Left cardiac atrium (tissue), 4 donors: ENCODE measurements at regions of chr3 and their contacts with region 1.

Region 1: GRCh38 chr3:160163229-160163878 is 61.9 kb upstream of the C3orf80 start:
- DNase-seq: no peak
- ATAC-seq: no peak

Region 2: DNA sequence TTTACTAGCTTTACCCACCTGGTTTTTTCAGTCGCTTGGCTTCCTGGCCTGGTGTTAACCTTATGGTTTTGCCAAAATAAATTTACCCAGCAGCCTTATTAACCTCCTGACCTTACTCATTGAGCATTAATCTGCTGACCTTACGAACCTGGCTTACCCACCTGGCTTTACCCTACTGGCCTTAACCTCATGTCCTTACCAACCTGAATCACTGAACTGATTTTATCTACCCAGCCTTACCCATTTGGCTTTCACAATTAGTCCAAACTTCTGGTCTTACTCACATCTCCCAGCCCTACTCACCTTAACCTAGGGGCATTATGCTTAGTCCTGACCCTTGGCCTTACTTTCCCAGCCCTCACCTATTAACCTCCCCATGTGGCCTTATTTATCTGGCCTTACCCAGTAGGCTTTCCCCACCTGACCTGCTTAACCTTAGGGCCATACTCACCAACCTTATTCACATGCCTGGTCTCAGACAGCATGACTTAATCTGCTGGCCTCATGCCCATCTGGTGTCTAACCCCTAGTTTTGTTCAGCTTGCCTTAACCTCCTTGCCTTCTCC is 81.3 kb before region 1 on chr3:
- intact Hi-C with region 1: no loop called
- DNase-seq: no peak
- ATAC-seq: no peak

Region 3: GRCh38 chr3:160331127-160331937 is 168.0 kb after region 1 on chr3:
- intact Hi-C with region 1: loop called in 1 of 2 experiments (anchors 10 kb)
- DNase-seq: no peak
- ATAC-seq: no peak

Region 4: DNA sequence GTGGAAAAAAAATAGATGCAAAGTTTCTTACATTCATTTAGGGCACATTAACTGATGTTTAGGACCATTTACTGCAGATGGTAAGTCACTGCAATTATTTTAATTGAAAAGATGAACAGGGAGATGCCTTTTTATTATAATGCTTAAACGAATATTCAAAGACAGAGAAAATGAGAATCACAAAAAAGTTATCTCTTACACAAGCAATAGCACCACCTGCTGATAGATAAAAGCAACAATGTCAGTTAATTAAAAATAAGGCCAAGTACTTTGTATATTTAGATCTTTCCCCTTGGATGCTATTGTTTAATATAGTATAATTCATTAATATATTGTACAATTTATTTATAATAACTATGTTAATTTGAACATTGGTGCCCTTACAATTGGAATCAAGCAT is 179.8 kb after region 1 on chr3:
- intact Hi-C with region 1: loop called (anchors 2 to 10 kb)
- DNase-seq: no peak
- ATAC-seq: no peak

Region 5: DNA sequence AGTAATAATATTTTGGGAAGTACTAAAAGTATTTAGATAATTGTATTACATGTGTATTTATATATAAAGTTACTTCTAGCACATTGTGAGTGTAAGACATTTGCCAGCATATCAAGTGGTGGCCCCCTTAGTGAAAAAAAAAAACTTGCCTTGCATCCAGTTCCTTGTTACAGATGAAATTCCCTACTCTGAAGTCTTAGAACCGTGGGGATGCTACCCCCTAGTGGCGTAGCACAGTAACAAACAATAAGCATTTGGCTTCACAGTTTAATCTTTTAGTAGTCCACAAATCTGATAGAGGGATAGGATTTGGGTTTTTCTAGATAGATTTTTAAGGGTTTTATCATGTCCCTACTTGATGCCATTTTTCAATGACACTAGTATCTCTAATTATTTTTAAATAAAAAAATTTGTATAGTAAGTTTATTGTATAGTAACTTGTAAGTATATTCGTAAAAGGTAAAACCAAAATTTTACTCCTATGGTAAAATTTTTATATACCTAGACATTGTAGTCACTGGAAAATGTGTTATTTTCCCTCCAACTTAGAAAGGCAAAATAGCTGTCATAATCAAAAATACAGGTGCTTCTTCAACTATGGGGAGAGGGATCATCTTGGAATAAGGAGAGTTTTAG is 250.4 kb after region 1 on chr3:
- intact Hi-C with region 1: loop called (anchors 5 to 10 kb)
- DNase-seq: peak; percentile 37
- ATAC-seq: peak; percentile 59 to 61